Activated CD4-positive, alpha-beta T cell treated with anti-CD3 and anti-CD28 coated beads, Interleukin-2, amount 10 ng/mL, durations not matched to agents 24 days and 14 days (primary cell): ENCODE measurements at regions of chr17 and their contacts with region 1.

Region 1: GRCh38 chr17:58517734-58518609 is 3.5 kb upstream of the MTMR4 start:
- DNase-seq: peak; percentile 100
- H3K4me3 Mint-ChIP-seq: peak overlapping the region; percentile 95
- H3K27ac Mint-ChIP-seq: peak overlapping the region; percentile 87
- H3K4me1 Mint-ChIP-seq: peaks cover 39% of the 10 kb centered on the region
- H3K27me3 Mint-ChIP-seq: no peaks in the 10 kb centered on the region

Region 2: GRCh38 chr17:58006924-58007780 is 510.8 kb before region 1 on chr17 and contains the start of gene SRSF1:
- intact Hi-C with region 1: loop called (anchors 1 kb)
- DNase-seq: peak; percentile 99
- H3K4me3 Mint-ChIP-seq: peak within 1 kb of the TSS; percentile 97
- H3K27ac Mint-ChIP-seq: peak within 1 kb of the TSS; percentile 99
- H3K4me1 Mint-ChIP-seq: peaks cover 38% of the 10 kb centered on the region
- H3K27me3 Mint-ChIP-seq: no peaks in the 10 kb centered on the region
- total RNA-seq, gene SRSF1: 510 and 515 TPM in 2 replicates

Region 3: DNA sequence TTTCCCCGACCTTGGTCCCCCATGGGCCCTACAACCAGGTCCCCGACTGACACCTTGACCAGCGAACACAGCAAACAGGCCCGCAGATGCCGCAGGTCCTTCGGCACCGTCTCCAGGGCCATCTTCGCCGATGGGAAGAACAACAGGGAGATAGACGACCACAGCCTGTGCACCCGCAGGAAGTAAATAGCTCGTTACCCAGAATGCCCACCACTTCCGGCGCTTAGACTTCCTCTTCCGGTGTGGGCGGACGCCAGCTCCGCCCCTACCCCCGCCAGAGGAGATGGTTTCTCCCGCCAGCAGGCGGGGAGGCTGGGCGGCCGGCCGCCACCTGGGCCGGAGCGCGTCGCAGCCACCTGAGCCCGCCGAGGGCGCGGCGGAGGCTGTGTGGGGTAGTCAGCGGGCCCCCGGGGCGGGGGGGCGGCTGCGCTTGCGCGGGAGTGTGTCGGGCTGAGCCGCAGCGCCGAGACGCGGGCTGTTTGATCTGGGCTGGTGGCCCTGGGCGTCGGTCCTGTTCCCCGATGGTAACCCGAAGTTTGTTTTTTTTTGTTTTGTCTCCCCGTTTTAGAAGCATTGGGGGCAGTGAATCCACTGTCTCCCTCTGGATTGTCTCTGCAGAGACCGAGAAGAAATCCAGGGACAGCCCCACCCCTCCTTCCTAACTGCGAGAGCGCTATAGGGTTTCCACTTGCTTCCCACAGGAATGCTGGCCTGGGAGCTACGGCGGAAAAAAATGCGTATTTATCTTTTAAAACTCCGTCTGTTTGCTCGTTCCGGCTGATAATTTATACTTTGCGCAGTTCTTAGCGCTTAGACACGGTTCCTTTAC is 165.7 kb before region 1 on chr17 and contains the start of gene SUPT4H1:
- intact Hi-C with region 1: loop called (anchors 5 kb)
- DNase-seq: peak; percentile 97
- H3K4me3 Mint-ChIP-seq: peak within 1 kb of the TSS; percentile 100
- H3K27ac Mint-ChIP-seq: peak within 1 kb of the TSS; percentile 99
- H3K4me1 Mint-ChIP-seq: peaks cover 45% of the 10 kb centered on the region
- H3K27me3 Mint-ChIP-seq: no peaks in the 10 kb centered on the region
- total RNA-seq, gene SUPT4H1: 139 and 143 TPM in 2 replicates

Region 4: GRCh38 chr17:58577642-58578091 is 59.7 kb after region 1 on chr17:
- intact Hi-C with region 1: no loop called
- DNase-seq: peak; percentile 83
- H3K4me3 Mint-ChIP-seq: no peak overlapping the region
- H3K27ac Mint-ChIP-seq: no peak overlapping the region
- H3K4me1 Mint-ChIP-seq: peaks cover 7% of the 10 kb centered on the region
- H3K27me3 Mint-ChIP-seq: peaks cover 1% of the 10 kb centered on the region

Region 5: DNA sequence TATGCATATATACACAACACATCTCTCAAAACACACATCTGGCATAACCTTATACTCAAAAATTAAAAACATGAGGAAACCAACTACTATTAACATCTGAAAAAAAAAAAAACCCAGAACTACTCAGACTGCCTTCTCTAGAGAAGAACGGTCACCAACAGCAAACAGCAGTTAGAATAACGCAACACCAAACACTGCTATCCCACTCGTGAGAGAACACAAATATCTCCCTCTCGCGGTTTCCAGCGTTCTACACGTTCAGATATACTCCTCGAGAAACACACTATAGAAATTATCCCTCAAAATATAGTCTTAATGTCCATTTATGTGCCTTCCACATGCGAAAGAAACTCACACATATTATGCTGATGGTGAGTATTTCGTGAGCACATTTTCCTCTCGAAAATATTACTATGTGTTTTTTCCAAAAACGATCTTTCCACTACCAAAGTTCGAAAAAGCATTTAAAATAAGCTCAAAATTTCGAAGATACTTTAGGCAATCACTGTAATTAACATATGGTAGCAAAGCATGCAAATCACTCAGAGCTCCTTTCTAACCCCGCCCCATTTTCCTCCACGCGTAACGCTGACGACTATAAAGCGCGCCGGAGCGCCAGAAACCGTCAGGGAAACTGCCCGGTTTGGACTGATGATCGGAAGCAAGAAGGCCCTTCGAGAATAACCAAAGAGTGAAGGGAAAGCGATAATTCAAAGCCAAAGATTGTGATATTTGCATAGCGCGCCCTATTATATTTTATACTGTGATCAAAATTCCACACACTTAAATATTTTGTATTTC is 113.8 kb after region 1 on chr17:
- intact Hi-C with region 1: loop called (anchors 1 kb)
- DNase-seq: peak; percentile 99
- H3K4me3 Mint-ChIP-seq: no peak overlapping the region
- H3K27ac Mint-ChIP-seq: no peak overlapping the region
- H3K4me1 Mint-ChIP-seq: peaks cover 2% of the 10 kb centered on the region
- H3K27me3 Mint-ChIP-seq: peaks cover 4% of the 10 kb centered on the region

Region 6: DNA sequence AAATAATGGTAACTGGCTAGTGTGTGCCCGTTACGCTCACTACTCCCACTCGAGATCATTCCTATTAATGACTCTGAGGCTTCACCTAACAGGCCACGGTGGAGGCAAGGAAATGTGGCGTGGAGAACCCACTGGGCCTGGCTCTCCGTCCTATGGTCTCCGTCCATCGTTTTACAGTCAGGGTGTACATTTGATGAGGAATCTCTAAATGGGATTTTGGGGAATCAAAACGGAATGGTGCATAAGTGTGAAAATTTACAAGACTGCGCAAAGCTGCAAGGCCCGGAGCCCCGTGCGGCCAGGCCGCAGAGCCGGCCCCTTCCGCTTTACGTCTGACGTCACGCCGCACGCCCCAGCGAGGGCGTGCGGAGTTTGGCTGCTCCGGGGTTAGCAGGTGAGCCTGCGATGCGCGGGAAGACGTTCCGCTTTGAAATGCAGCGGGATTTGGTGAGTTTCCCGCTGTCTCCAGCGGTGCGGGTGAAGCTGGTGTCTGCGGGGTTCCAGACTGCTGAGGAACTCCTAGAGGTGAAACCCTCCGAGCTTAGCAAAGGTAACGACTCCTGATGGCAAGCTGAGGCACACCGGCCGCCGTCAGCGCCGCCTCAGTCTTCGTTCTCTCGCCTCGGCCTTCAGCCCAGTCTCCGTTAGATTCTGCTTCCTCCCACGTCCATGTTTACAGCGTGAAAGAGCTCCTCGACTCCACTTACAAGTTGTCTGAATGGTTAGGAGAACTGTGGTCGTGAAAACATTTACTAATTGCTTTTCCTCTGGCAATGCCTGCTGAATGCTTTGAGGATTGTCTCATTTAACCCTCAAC is 174.5 kb after region 1 on chr17 and contains the start of gene RAD51C:
- intact Hi-C with region 1: loop called (anchors 5 kb)
- DNase-seq: peak; percentile 97
- H3K4me3 Mint-ChIP-seq: peak within 1 kb of the TSS; percentile 95
- H3K27ac Mint-ChIP-seq: peak within 1 kb of the TSS; percentile 96
- H3K4me1 Mint-ChIP-seq: peaks cover 21% of the 10 kb centered on the region
- H3K27me3 Mint-ChIP-seq: no peaks in the 10 kb centered on the region
- total RNA-seq, gene RAD51C: 73.7 and 78.8 TPM in 2 replicates

Region 7: GRCh38 chr17:59106463-59107305 is 588.7 kb after region 1 on chr17 and contains the start of gene TRIM37:
- intact Hi-C with region 1: loop called (anchors 1 kb)
- DNase-seq: peak; percentile 100
- H3K4me3 Mint-ChIP-seq: peak within 1 kb of the TSS; percentile 96
- H3K27ac Mint-ChIP-seq: peak within 1 kb of the TSS; percentile 97
- H3K4me1 Mint-ChIP-seq: peaks cover 42% of the 10 kb centered on the region
- H3K27me3 Mint-ChIP-seq: peaks cover 2% of the 10 kb centered on the region
- total RNA-seq, gene TRIM37: 26.5 and 29.3 TPM in 2 replicates

Region 8: GRCh38 chr17:59707114-59707970 is 1189.4 kb after region 1 on chr17 and contains the starts of genes PTRH2 and VMP1:
- intact Hi-C with region 1: loop called (anchors 5 kb)
- DNase-seq: peak; percentile 98
- H3K4me3 Mint-ChIP-seq: peak within 1 kb of the TSS; percentile 91
- H3K27ac Mint-ChIP-seq: peak within 1 kb of the TSS; percentile 87
- H3K4me1 Mint-ChIP-seq: peaks cover 43% of the 10 kb centered on the region
- H3K27me3 Mint-ChIP-seq: no peaks in the 10 kb centered on the region
- total RNA-seq, gene PTRH2: 49.0 and 50.3 TPM in 2 replicates
- total RNA-seq, gene VMP1: 417 and 422 TPM in 2 replicates